ENCODE measurements at regions of chr7 and their contacts with region 1.

Region 1: GRCh38 chr7:128425850-128426249 is 16.1 kb upstream of the IMPDH1 start:
- DNase-seq: peak; percentile 76 to 87
- ATAC-seq: peak; percentile 35 to 63 (median 52)
- H3K4me3 ChIP-seq: no peak overlapping the region
- H3K4me3 Mint-ChIP-seq: no peak overlapping the region
- H3K27ac ChIP-seq: no peak overlapping the region
- H3K27ac Mint-ChIP-seq: no peak overlapping the region
- H3K4me1 ChIP-seq: peaks cover 30% of the 10 kb centered on the region
- H3K4me1 Mint-ChIP-seq: peaks cover 21 to 34% of the 10 kb centered on the region in 2 donors
- H3K27me3 ChIP-seq: peaks cover 2% of the 10 kb centered on the region
- H3K27me3 Mint-ChIP-seq: peaks cover 7 to 15% of the 10 kb centered on the region in 2 donors
- CTCF ChIP-seq: peak; percentile 78

Region 2: GRCh38 chr7:128347647-128348097 is 78.2 kb before region 1 on chr7:
- intact Hi-C with region 1: loop called (anchors 2 kb)
- DNase-seq: peak in 1 of 2 donors; percentile 67
- ATAC-seq: no peak
- H3K4me3 ChIP-seq: no peak overlapping the region
- H3K4me3 Mint-ChIP-seq: peak overlapping the region; percentile 9
- H3K27ac ChIP-seq: no peak overlapping the region
- H3K27ac Mint-ChIP-seq: no peak overlapping the region
- H3K4me1 ChIP-seq: peaks cover 13% of the 10 kb centered on the region
- H3K4me1 Mint-ChIP-seq: peaks cover 6 to 11% of the 10 kb centered on the region in 2 donors
- H3K27me3 ChIP-seq: peaks cover 12% of the 10 kb centered on the region
- H3K27me3 Mint-ChIP-seq: peaks cover 10 to 21% of the 10 kb centered on the region in 2 donors
- CTCF ChIP-seq: peak; percentile 20

Region 3: DNA sequence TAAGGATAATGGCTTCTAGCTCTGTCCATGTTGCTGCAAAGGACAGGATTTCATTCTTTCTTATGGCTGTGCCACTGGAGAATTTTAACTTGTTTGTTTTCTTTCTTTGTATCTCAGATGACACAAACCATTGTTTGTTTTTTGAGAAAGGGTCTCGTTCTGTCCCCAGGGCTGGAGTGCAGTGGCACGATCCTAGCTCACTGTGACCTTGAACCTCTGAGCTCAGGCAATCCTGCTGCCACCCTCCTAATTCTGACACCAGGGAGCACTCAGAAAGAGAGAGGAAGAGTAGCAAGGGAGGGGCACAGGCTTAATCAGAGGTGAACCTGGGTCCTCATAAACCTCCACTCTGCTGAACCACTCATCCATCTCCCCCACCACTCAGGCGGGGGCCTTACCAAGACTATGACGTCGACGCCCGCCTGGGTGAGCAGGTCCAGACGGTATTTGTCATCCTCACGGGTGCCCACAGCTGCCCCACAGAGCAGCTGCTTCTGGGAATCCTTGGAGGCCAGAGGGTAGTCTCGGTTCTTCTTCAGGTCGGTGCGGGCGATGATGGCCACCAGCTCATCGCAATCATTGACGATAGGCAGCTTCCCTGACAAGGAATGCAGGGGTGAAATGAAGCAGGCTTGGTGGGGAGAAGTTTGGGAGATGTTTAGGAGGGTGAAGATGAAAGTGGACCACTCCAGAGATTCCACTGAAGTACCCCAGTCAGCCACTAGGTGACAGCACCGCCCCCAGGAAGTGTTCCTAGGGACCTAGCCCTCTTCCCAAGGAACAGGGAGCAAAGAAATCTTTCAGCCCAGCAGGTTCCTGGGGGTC is 27.6 kb before region 1 on chr7:
- intact Hi-C with region 1: loop called (anchors 1 kb)
- DNase-seq: peak in 1 of 2 donors; percentile 64
- ATAC-seq: peak in 2 of 3 donors; percentile 75 to 79
- H3K4me3 ChIP-seq: no peak overlapping the region
- H3K4me3 Mint-ChIP-seq: no peak overlapping the region
- H3K27ac ChIP-seq: no peak overlapping the region
- H3K27ac Mint-ChIP-seq: no peak overlapping the region
- H3K4me1 ChIP-seq: no peaks in the 10 kb centered on the region
- H3K4me1 Mint-ChIP-seq: peaks cover 0 to under 1% of the 10 kb centered on the region in 2 donors
- H3K27me3 ChIP-seq: no peaks in the 10 kb centered on the region
- H3K27me3 Mint-ChIP-seq: no peaks in the 10 kb centered on the region
- CTCF ChIP-seq: peak; percentile 92

Region 4: DNA sequence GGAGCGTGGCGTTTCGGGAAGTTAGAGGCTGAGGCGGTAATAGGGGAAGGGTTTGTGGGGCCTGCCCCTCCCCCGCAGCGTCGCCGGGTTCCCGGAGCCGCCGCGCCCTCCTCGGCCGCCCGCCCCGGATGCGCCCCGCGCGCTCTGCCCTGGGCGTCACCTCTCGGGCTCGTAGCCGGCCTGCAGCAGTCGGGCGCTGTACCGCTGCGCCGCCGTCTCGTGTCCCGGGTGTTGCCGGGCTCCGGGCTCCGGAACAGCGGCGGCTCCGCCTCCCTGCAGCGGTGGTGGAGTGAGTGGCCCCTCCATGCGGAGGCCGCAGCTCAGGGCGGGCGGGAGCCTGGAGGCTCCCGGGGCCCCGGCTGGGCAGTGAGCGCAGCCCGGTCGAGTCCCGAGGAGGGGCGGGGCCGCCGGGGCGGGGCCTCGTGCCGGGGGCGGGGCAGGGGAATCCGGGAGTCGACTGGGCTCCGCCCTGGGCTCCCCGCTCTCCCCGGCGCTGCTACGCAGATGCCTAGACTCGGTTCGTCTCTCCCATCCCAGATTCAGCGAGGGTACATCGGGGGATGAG is 16.2 kb before region 1 on chr7 and contains the start of gene IMPDH1:
- intact Hi-C with region 1: loop called (anchors 1 kb)
- DNase-seq: peak; percentile 81 to 87
- ATAC-seq: peak; percentile 77 to 89 (median 80)
- H3K4me3 ChIP-seq: peak within 1 kb of the TSS; percentile 99
- H3K4me3 Mint-ChIP-seq: peak within 1 kb of the TSS; percentile 92
- H3K27ac ChIP-seq: peak within 1 kb of the TSS; percentile 96
- H3K27ac Mint-ChIP-seq: peak within 1 kb of the TSS; percentile 73 to 87
- H3K4me1 ChIP-seq: peaks cover 51% of the 10 kb centered on the region
- H3K4me1 Mint-ChIP-seq: peaks cover 32 to 39% of the 10 kb centered on the region in 2 donors
- H3K27me3 ChIP-seq: no peaks in the 10 kb centered on the region
- H3K27me3 Mint-ChIP-seq: no peaks in the 10 kb centered on the region
- CTCF ChIP-seq: no peak
- total RNA-seq, gene IMPDH1: 77.8 to 94.1 (median 89.6) TPM

Region 5: DNA sequence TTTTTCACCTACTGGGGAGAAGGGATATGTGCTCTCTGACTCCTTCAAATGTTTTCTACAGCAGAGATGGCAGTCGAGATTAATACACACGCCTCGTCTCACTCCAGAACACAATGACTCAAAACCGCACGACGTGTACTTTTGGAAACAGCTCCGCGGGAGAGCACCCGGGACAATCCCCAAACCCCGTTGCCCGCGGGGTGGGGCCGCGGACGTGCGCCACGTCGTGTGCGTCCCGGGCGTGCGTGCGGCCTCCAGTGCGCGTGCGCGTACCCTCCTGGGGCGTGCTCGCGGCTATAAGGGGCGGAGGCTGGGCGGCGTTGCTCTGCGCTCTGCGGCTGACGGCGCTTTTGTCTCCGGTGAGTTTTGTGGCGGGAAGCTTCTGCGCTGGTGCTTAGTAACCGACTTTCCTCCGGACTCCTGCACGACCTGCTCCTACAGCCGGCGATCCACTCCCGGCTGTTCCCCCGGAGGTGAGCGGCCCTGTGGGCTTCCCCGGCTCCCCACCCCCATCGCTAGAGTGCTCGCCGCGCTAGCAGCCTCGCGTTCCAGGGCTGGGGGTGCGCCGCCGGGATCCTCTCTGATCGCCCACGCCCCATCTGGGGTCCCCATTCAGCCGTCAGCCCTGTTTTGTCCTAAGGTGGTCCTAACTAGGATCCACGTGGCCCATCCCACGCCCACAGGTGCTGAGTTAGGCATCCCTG is 29.9 kb after region 1 on chr7 and contains the start of gene HILPDA:
- intact Hi-C with region 1: loop called (anchors 1 kb)
- DNase-seq: peak; percentile 90 to 99
- ATAC-seq: peak; percentile 85 to 92 (median 87)
- H3K4me3 ChIP-seq: peak within 1 kb of the TSS; percentile 61
- H3K4me3 Mint-ChIP-seq: peak within 1 kb of the TSS; percentile 91
- H3K27ac ChIP-seq: peak within 1 kb of the TSS; percentile 88
- H3K27ac Mint-ChIP-seq: peak within 1 kb of the TSS; percentile 88
- H3K4me1 ChIP-seq: peaks cover 33% of the 10 kb centered on the region
- H3K4me1 Mint-ChIP-seq: peaks cover 35 to 36% of the 10 kb centered on the region in 2 donors
- H3K27me3 ChIP-seq: no peaks in the 10 kb centered on the region
- H3K27me3 Mint-ChIP-seq: peaks cover 7 to 17% of the 10 kb centered on the region in 2 donors
- CTCF ChIP-seq: no peak
- total RNA-seq, gene HILPDA: 1.9 to 5.1 (median 2.3) TPM

Region 6: DNA sequence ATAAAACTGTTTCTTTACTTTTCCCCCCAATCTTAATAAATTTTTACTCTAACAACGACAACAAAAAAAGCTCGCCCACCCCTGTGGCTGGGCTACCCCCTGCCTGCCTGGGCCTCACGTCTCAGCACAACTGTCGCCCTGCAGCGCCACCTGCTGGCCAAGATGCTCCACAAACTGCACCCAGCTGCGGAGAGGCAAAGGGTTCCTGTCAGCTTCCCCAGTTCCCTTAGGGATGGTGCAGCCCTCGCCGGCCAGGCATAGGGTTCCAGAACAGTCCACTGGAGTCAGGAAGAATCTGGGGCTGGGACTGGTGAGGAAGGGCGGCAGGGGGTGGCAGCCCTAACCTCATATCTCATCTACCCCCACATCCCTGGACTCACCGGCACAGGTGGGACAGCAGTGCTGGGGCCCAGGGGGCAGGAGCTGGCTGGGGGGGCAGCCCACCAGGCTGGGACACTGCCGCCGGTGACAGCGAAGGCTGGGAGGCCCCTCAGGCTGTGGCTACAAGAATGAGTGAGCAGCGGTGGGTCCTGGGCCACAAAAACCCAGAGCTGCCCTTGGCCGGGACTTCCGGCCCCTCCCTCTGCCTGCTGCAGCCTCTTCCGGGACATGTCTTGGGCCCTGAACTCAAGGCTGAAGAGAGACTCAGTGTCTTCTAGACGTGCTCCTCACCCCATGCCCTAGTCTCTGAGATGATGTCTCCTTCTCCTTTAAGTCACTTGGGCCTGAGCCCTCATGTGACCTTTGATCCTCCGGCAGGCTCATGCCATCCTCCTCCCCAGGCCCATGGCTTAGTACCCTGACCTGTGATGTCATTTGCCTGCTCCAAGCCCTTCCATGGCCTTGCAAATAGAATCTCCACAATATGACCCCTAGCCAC is 458.0 kb after region 1 on chr7:
- intact Hi-C with region 1: loop called (anchors 2 kb)
- DNase-seq: peak; percentile 82 to 92
- ATAC-seq: peak; percentile 76 to 95 (median 89)
- H3K4me3 ChIP-seq: peak overlapping the region; percentile 26
- H3K4me3 Mint-ChIP-seq: no peak overlapping the region
- H3K27ac ChIP-seq: no peak overlapping the region
- H3K27ac Mint-ChIP-seq: no peak overlapping the region
- H3K4me1 ChIP-seq: no peaks in the 10 kb centered on the region
- H3K4me1 Mint-ChIP-seq: no peaks in the 10 kb centered on the region
- H3K27me3 ChIP-seq: peaks cover 2% of the 10 kb centered on the region
- H3K27me3 Mint-ChIP-seq: peaks cover 0 to 3% of the 10 kb centered on the region in 2 donors
- CTCF ChIP-seq: peak; percentile 96

Measured in natural killer cell (primary cell).